ENCODE measurements at regions of chrX and their contacts with region 1.

Region 1: GRCh38 chrX:119887721-119888425 is 7.8 kb upstream of the AKAP14 start:
- DNase-seq: peak; percentile 85 to 86
- H3K4me3 ChIP-seq: peak overlapping the region; percentile 47
- H3K4me3 Mint-ChIP-seq: peak overlapping the region; percentile 66
- H3K27ac Mint-ChIP-seq: no peak overlapping the region
- H3K4me1 ChIP-seq: peaks cover 7% of the 10 kb centered on the region; the same call in 1 of the 2 replicates
- H3K4me1 Mint-ChIP-seq: no peaks in the 10 kb centered on the region
- H3K27me3 ChIP-seq: no peaks in the 10 kb centered on the region
- H3K27me3 Mint-ChIP-seq: no peaks in the 10 kb centered on the region
- CTCF ChIP-seq: peak; percentile 51 to 73

Region 2: GRCh38 chrX:119871599-119872395 is 16.1 kb before region 1 on chrX and contains the starts of genes NDUFA1 and RNF113A:
- CTCF ChIA-PET with region 1: interaction called, 6 read pairs
- POLR2A ChIA-PET with region 1: interaction called, 11 read pairs
- intact Hi-C with region 1: no loop called
- DNase-seq: peak; percentile 84 to 86
- H3K4me3 ChIP-seq: peak within 1 kb of the TSS; percentile 74
- H3K4me3 Mint-ChIP-seq: peak within 1 kb of the TSS; percentile 95
- H3K27ac Mint-ChIP-seq: peak within 1 kb of the TSS; percentile 96
- H3K4me1 ChIP-seq: no peaks in the 10 kb centered on the region
- H3K4me1 Mint-ChIP-seq: no peaks in the 10 kb centered on the region
- H3K27me3 ChIP-seq: no peaks in the 10 kb centered on the region
- H3K27me3 Mint-ChIP-seq: no peaks in the 10 kb centered on the region
- CTCF ChIP-seq: no peak
- total RNA-seq, gene NDUFA1: 82.6 and 83.6 TPM in 2 replicates
- total RNA-seq, gene RNF113A: 12.7 and 13.3 TPM in 2 replicates

Region 3: DNA sequence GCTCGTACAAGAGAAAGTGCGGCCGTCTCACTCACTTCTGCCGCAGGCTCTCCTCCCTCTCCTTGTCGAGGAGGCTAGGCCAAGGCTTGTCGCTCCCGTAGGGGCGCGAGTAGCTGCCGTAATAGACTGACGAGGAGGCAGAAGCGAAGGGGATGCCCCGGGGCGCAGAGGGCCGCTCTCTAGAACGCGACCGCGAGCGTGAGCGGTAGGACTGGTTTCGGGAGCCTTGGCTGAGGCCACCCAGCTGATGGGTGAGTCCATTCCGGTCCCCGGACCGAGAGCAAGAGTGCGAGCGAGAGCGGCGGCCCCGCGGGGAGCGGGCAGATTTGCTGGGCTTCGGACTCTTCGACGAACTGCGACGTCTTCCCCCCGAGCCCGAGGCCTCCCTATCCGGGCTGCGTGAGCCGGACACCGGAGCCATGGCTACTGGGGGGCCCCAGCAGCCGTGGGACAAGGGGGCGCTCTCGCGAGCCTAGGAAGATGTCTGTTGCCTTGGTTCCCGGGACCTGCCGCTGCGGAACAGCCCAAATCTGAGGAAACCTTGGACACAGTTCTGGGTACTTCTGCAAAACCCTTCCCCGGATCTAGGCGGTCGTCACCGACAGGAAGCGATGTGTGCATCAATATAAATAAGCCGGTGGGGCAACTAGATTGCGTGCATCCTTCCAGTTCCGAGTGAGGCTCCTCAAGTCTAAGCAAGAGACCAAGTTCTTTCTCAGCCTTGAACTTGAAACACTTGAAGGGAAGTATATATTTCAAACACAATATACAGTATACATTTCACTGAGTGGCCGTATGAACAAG is 55.5 kb after region 1 on chrX and contains the start of gene NKAP:
- CTCF ChIA-PET with region 1: no interaction called
- POLR2A ChIA-PET with region 1: no interaction called
- intact Hi-C with region 1: loop called (anchors 5 kb)
- DNase-seq: peak; percentile 87
- H3K4me3 ChIP-seq: peak within 1 kb of the TSS; percentile 69
- H3K4me3 Mint-ChIP-seq: peak within 1 kb of the TSS; percentile 88
- H3K27ac Mint-ChIP-seq: peak within 1 kb of the TSS; percentile 89
- H3K4me1 ChIP-seq: no peaks in the 10 kb centered on the region
- H3K4me1 Mint-ChIP-seq: no peaks in the 10 kb centered on the region
- H3K27me3 ChIP-seq: no peaks in the 10 kb centered on the region; the same call in 1 of the 2 replicates
- H3K27me3 Mint-ChIP-seq: peaks cover under 1% of the 10 kb centered on the region
- CTCF ChIP-seq: no peak
- total RNA-seq, gene NKAP: 7.2 and 9.5 TPM in 2 replicates